ENCODE measurements at regions of chr11 and their contacts with region 1.

Region 1: DNA sequence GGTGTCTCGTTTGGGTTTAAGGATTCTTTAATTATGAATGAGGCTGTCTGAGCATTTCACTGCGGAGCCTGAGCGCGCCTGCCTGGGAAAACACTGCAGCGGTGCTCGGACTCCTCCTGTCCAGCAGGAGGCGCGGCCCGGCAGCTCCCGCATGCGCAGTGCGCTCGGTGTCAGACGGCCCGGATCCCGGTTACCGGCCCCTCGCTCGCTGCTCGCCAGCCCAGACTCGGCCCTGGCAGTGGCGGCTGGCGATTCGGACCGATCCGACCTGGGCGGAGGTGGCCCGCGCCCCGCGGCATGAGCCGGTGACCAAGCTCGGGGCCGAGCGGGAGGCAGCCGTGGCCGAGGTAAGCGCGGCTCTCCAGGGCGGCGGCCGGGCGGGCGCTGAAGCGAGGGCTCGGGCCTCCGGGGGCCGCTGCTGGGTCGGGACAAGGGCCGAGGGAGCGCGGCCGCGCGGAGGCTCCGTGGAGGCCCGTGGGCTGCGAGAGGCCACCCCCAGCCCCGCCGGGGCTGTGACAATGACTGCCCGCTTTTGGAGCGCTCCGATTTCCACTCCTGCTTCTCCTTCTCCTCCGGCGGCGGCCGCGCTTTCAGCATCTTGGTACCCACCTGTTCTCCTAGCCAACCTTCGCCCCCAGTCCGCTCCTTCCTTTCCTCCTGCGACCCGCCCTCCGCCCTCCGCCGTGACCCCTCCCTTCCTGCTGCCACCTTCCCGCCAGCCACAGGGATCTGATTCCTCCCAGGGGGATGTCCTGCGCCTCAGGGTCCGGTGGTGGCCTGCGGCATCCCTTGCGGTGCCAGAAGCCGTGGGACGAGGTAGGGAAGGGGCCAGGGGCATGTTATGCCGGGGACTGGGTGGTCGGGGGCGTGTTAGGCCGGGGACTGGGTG is at the start of gene EXT2:
- DNase-seq: peak; percentile 86 to 93
- ATAC-seq: peak; percentile 93 to 95 (median 94)
- H3K4me3 ChIP-seq: peak within 1 kb of the TSS; percentile 68
- H3K4me3 Mint-ChIP-seq: peak within 1 kb of the TSS; percentile 87
- H3K27ac ChIP-seq: no peak within 1 kb of the TSS
- H3K27ac Mint-ChIP-seq: peak within 1 kb of the TSS; percentile 17 to 76
- H3K4me1 ChIP-seq: peaks cover 17% of the 10 kb centered on the region
- H3K4me1 Mint-ChIP-seq: peaks cover 27 to 52% of the 10 kb centered on the region in 2 donors
- H3K27me3 ChIP-seq: no peaks in the 10 kb centered on the region
- H3K27me3 Mint-ChIP-seq: no peaks in the 10 kb centered on the region
- CTCF ChIP-seq: peak; percentile 93
- total RNA-seq, gene EXT2: 44.2 to 50.3 (median 45.8) TPM

Region 2: DNA sequence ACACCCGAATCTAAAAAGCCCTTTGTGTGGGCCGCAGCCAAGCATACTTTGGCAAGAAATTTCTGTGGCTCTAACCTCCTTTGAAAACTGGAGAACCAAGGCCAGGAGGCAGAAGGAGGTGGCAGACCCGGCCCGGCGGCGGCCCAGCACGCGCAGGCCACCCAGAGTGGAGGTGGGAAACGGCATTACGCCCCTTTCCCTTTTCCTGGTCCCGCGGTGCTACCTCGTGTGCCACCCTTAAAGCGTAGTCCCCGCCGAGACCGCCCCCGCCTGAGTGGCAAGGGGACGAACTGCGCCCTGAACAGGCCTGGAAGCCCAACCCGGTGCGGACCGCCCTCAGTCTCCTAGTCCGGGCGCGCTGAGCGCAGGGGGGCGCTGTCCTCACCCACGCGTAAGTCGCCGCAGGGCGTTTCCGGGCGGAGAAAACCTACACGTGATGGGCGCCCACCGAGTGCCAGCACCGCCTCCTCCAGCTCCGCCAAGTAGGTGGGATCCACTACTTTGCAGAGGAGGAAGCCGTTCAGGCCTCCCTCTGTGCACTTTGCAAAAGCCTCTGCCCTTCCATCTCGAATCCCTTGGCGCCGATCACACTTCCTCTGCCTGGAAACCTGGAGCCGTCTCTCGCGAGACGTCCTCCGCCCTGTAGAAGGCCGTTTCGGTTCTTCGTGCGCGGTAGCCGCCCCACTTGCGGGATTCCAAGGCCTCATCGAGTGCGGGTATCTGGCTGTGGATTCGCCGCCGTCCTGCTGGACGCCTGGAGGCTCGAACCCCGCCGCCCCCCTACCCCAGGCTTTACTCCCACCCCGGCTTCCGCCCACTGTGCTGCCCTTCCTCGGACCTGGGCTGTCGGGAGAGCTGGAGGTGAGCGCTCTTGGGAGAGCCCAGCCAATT is 29.7 kb before region 1 on chr11 and contains the start of gene ACCS:
- intact Hi-C with region 1: loop called (anchors 2 kb)
- DNase-seq: peak; percentile 87 to 95
- ATAC-seq: peak; percentile 95 to 98 (median 97)
- H3K4me3 ChIP-seq: peak within 1 kb of the TSS; percentile 96
- H3K4me3 Mint-ChIP-seq: peak within 1 kb of the TSS; percentile 93
- H3K27ac ChIP-seq: peak within 1 kb of the TSS; percentile 70
- H3K27ac Mint-ChIP-seq: peak within 1 kb of the TSS; percentile 79 to 95
- H3K4me1 ChIP-seq: peaks cover 13% of the 10 kb centered on the region
- H3K4me1 Mint-ChIP-seq: peaks cover 20 to 33% of the 10 kb centered on the region in 2 donors
- H3K27me3 ChIP-seq: no peaks in the 10 kb centered on the region
- H3K27me3 Mint-ChIP-seq: peaks cover 0 to 3% of the 10 kb centered on the region in 2 donors
- CTCF ChIP-seq: peak; percentile 95
- total RNA-seq, gene ACCS: 16.3 to 32.1 (median 31.9) TPM

Region 3: GRCh38 chr11:44133335-44133946 is 37.7 kb after region 1 on chr11:
- intact Hi-C with region 1: no loop called
- DNase-seq: no peak
- ATAC-seq: no peak
- H3K4me3 ChIP-seq: no peak overlapping the region
- H3K4me3 Mint-ChIP-seq: no peak overlapping the region
- H3K27ac ChIP-seq: no peak overlapping the region
- H3K27ac Mint-ChIP-seq: no peak overlapping the region
- H3K4me1 ChIP-seq: no peaks in the 10 kb centered on the region
- H3K4me1 Mint-ChIP-seq: peaks cover 0 to 6% of the 10 kb centered on the region in 2 donors
- H3K27me3 ChIP-seq: no peaks in the 10 kb centered on the region
- H3K27me3 Mint-ChIP-seq: no peaks in the 10 kb centered on the region
- CTCF ChIP-seq: no peak